B cell (primary cell): ENCODE measurements at regions of chr19 and their contacts with region 1.

Region 1: GRCh38 chr19:55289117-55289796 is 5.5 kb downstream of the BRSK1 start:
- DNase-seq: no peak
- ATAC-seq: no peak
- H3K4me3 ChIP-seq: no peak overlapping the region
- H3K4me3 Mint-ChIP-seq: no peak overlapping the region
- H3K27ac ChIP-seq: no peak overlapping the region
- H3K27ac Mint-ChIP-seq: no peak overlapping the region
- H3K4me1 ChIP-seq: peaks cover 4 to 6% of the 10 kb centered on the region in 2 donors
- H3K4me1 Mint-ChIP-seq: peaks cover 5% of the 10 kb centered on the region
- H3K27me3 ChIP-seq: no peaks in the 10 kb centered on the region
- H3K27me3 Mint-ChIP-seq: no peaks in the 10 kb centered on the region
- CTCF ChIP-seq: no peak

Region 2: GRCh38 chr19:55385740-55386529 is 96.7 kb after region 1 on chr19 and contains the start of gene RPL28:
- CTCF ChIA-PET with region 1: interaction called, 19 read pairs
- POLR2A ChIA-PET with region 1: no interaction called
- intact Hi-C with region 1: no loop called
- DNase-seq: peak; percentile 99
- ATAC-seq: peak; percentile 81
- H3K4me3 ChIP-seq: peak within 1 kb of the TSS; percentile 85 to 99 (median 97)
- H3K4me3 Mint-ChIP-seq: peak within 1 kb of the TSS; percentile 100
- H3K27ac ChIP-seq: peak within 1 kb of the TSS; percentile 96
- H3K27ac Mint-ChIP-seq: peak within 1 kb of the TSS; percentile 100
- H3K4me1 ChIP-seq: peaks cover 40 to 57% of the 10 kb centered on the region in 2 donors
- H3K4me1 Mint-ChIP-seq: peaks cover 68% of the 10 kb centered on the region
- H3K27me3 ChIP-seq: no peaks in the 10 kb centered on the region
- H3K27me3 Mint-ChIP-seq: no peaks in the 10 kb centered on the region
- CTCF ChIP-seq: no peak
- total RNA-seq, gene RPL28: 2,397 and 2,578 TPM in 2 replicates

Region 3: DNA sequence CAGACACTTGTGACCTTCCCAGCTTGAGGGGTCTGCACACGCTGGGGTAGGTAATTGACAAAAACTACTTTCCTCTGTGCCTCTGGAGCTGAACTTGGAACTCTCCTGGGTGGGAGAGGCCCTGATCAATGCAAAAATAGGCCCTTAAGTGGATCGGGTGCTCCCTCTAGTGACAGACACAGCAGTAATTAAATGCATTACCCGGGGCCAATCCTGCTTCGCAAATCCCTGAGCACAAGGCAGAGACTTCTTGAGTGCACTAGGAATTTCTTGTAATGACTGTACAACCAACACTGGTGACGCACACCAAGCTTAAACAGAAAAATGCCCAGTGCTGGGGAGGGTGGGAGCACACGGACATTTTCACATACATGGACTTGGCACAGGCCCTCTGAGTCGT is 128.9 kb after region 1 on chr19:
- CTCF ChIA-PET with region 1: interaction called, 4 read pairs
- POLR2A ChIA-PET with region 1: no interaction called
- intact Hi-C with region 1: loop called (anchors 1 kb)
- DNase-seq: peak; percentile 73
- ATAC-seq: peak; percentile 56
- H3K4me3 ChIP-seq: no peak overlapping the region
- H3K4me3 Mint-ChIP-seq: no peak overlapping the region
- H3K27ac ChIP-seq: no peak overlapping the region
- H3K27ac Mint-ChIP-seq: no peak overlapping the region
- H3K4me1 ChIP-seq: no peaks in the 10 kb centered on the region
- H3K4me1 Mint-ChIP-seq: no peaks in the 10 kb centered on the region
- H3K27me3 ChIP-seq: peaks cover 0 to 18% (median 0%) of the 10 kb centered on the region in 4 experiments
- H3K27me3 Mint-ChIP-seq: peaks cover 19% of the 10 kb centered on the region
- CTCF ChIP-seq: peak; percentile 68